CD4-positive, alpha-beta memory T cell (primary cell): ENCODE measurements at regions of chr4 and their contacts with region 1.

Region 1: GRCh38 chr4:169582205-169582604 is 30.2 kb downstream of the NEK1 start:
- DNase-seq: no peak
- H3K4me3 ChIP-seq: no peak overlapping the region
- H3K4me3 Mint-ChIP-seq: no peak overlapping the region
- H3K27ac ChIP-seq: no peak overlapping the region
- H3K27ac Mint-ChIP-seq: no peak overlapping the region
- H3K4me1 ChIP-seq: no peaks in the 10 kb centered on the region
- H3K4me1 Mint-ChIP-seq: no peaks in the 10 kb centered on the region
- H3K27me3 ChIP-seq: no peaks in the 10 kb centered on the region
- H3K27me3 Mint-ChIP-seq: no peaks in the 10 kb centered on the region

Region 2: DNA sequence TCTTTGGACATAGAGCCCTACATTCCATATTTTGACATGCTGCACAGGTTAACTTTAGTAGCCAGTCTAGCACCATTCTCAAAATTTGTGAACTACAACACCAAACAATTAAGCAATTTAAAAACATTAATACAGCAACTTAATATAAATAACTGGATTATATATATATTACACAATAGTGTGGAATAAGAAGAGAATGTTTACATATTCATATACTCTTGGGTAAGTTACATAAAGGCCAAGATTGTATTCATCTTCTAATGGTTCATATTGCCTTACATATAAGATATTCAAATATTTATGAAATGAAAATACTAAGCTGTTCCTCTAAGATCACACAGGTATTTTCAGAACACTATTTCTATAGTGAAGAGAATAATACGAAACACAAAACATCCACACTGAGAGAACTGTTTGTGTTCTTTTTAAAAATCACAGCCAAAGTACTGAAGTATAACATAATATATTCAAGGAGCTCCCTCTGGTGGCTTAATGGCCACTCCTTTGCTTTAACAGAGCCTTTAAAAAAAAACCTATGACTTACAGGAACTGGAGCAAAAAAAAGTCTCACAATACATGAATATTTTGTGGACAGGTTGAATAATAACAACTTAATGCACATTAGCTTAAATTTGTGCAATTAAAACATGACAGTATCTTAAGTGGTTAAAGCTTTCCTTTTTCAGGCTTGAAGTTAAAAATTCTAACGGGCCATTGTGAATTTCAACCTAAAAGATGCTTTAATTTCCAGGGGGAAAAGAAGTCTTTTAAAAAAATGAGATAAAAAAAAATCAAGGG is 16.0 kb before region 1 on chr4:
- CTCF ChIA-PET with region 1: interaction called, 22 read pairs
- POLR2A ChIA-PET with region 1: no interaction called
- intact Hi-C with region 1: no loop called
- DNase-seq: peak in 4 of 5 donors; percentile 23 to 40 (median 26)
- H3K4me3 ChIP-seq: no peak overlapping the region
- H3K4me3 Mint-ChIP-seq: no peak overlapping the region
- H3K27ac ChIP-seq: no peak overlapping the region
- H3K27ac Mint-ChIP-seq: no peak overlapping the region
- H3K4me1 ChIP-seq: no peaks in the 10 kb centered on the region
- H3K4me1 Mint-ChIP-seq: peaks cover 4 to 5% (median 4%) of the 10 kb centered on the region in 4 donors
- H3K27me3 ChIP-seq: no peaks in the 10 kb centered on the region
- H3K27me3 Mint-ChIP-seq: no peaks in the 10 kb centered on the region

Region 3: DNA sequence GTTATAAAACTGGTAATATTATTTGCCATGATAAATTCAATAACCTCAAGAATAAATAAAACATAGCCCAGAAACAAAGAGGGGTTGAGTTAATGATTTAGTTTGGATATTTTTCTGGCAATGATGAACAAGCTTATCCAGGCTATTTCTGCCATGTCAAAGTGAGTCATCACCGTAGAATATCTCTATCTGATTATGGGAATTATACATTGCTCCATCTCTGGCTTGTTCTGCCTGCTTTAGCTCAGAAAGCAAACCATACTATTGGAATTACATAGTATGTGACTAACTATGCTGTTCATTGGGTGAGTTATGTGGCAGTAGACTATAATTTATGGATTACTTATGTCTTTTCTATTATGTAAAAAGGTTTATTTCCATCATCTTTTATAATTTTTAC is 1187.7 kb after region 1 on chr4:
- CTCF ChIA-PET with region 1: no interaction called
- POLR2A ChIA-PET with region 1: no interaction called
- intact Hi-C with region 1: no loop called
- DNase-seq: no peak
- H3K4me3 ChIP-seq: no peak overlapping the region
- H3K4me3 Mint-ChIP-seq: no peak overlapping the region
- H3K27ac ChIP-seq: no peak overlapping the region
- H3K27ac Mint-ChIP-seq: no peak overlapping the region
- H3K4me1 ChIP-seq: no peaks in the 10 kb centered on the region
- H3K4me1 Mint-ChIP-seq: no peaks in the 10 kb centered on the region
- H3K27me3 ChIP-seq: no peaks in the 10 kb centered on the region
- H3K27me3 Mint-ChIP-seq: no peaks in the 10 kb centered on the region